AG04449 (cell line): ENCODE measurements at regions of chr17 and their contacts with region 1.

Region 1: DNA sequence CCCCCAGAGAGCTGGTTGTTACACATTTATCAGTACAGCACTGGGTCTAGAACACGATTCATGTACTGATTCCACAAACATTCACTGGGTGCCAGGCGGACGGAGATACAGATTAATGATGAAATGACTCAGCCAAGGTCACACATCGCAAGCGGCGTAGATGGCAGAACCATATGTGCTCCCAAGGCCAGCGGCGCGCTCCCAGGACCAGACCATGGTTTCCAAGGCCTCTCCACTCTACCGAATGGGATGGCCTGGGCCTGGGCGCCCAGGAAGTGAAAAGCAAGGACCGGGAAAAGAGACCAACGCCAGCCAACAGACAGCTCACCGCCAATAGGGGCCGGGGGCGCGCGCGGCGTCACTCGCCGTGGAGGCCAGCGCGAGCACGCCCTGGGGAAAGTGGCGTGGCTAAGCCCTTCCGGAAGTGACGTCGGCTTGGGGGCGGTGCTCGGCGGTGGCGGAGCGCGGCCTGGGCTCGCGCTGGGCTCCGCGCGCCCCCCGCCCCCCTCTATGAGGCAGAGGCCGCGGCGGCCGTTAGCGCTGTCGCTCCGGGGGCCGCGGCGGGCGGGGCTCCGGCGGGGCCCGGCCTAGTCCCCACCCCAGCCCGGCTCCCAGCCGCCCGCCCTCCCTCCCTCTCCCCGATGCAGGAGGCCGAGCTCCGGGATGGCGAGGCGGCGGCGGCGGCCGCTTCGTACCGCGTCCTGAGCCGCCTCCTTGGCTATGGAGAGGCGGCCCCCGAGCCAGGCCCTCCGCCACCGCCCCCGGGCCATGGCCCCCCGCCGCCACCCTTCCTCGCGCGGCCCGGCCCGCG is at the start of gene SOCS7:
- DNase-seq: peak; percentile 17
- H3K4me3 ChIP-seq: peak within 1 kb of the TSS; percentile 75
- CTCF ChIP-seq: no peak

Region 2: GRCh38 chr17:37541880-37542660 is 809.5 kb before region 1 on chr17:
- CTCF ChIA-PET with region 1: no interaction called
- POLR2A ChIA-PET with region 1: no interaction called
- DNase-seq: peak; percentile 73
- H3K4me3 ChIP-seq: no peak overlapping the region
- CTCF ChIP-seq: no peak

Region 3: GRCh38 chr17:37824534-37825485 is 526.8 kb before region 1 on chr17:
- CTCF ChIA-PET with region 1: no interaction called
- POLR2A ChIA-PET with region 1: no interaction called
- DNase-seq: no peak
- H3K4me3 ChIP-seq: no peak overlapping the region
- CTCF ChIP-seq: no peak

Region 4: DNA sequence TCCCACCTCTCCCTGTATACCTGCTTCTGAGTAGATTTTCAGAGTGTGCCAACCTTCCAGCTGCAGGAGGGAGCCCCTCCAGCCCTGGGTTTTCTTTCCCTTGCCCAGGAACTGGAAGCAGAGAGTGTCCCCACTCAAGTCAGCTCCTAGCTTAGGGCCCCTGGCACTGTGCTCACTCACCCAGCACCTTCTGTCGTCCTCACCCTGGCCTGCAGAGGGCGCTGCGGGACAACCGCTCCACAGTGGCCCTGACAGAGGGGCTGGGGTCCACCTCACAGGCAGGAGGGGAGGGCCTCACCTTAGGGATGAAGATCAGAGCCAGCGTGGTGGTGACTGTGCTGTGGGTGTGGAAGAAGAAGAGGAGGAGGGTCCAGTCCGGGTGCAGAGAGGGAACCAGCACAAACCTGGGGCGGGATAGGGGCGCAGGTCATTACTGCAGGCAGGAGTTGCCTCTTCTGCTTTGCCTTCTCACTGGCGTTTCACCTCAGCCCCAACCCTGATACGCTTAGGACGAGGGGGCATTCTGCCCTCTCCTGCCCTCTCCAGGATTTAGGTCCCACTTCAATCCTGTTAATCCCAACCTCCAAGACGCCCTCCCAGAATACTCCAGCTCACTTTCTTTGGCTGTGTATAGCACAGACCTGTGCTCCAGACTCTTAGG is 17.9 kb before region 1 on chr17:
- CTCF ChIA-PET with region 1: interaction called, 81 read pairs
- POLR2A ChIA-PET with region 1: no interaction called
- DNase-seq: no peak
- H3K4me3 ChIP-seq: no peak overlapping the region
- CTCF ChIP-seq: peak; percentile 75

Region 5: GRCh38 chr17:38379438-38379837 is 27.8 kb after region 1 on chr17:
- CTCF ChIA-PET with region 1: interaction called, 40 read pairs
- POLR2A ChIA-PET with region 1: interaction called, 4 read pairs
- DNase-seq: no peak
- H3K4me3 ChIP-seq: no peak overlapping the region
- CTCF ChIP-seq: no peak

Region 6: DNA sequence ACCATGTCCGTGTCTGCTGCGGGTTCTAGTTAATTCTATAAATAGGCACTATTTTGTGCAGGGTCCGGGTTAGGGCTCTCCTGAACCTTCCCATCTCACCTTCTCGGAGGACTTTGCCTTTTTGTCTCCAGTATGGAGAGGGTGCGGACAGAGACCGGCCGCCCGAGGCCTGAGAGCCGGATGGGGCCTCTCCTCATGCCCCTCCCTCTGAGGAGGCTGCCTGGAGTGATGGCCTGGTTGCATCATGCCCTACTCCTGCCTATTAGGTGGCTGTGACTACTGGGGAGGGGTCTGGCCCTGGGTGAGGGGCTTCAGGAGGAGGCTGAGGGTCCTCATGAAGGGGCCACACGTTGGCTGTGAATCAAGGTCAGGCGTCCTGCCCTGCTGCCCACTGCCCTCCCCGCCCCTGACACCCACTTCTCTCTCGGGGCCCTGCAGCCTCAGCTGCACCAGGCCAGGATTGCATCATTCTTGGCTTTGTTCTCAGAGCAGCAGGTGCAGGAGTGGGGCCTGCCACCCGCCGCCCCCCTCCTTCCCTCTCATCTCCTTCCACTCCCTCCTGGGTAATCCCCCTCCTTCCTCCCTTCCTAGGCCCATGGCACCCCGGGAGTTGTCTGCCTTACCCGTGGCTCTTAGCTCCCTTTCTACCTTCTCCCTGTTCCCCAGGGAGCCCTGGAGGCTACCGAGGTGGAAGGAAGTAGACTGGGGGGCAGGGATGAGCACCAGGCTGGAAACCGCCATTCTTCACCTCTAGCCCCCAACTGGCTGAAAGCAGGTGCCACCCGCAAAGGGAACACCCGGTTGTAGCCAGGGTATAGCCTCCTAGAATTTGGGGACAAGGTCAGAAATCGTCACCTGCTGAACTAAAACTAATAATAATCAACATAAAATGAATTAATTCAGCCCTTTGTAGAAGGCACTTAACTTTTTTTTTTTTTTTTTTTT is 63.9 kb after region 1 on chr17:
- CTCF ChIA-PET with region 1: interaction called, 456 read pairs
- POLR2A ChIA-PET with region 1: interaction called, 4 read pairs
- DNase-seq: no peak
- H3K4me3 ChIP-seq: peak overlapping the region; percentile 36
- CTCF ChIP-seq: no peak

Region 7: GRCh38 chr17:38428112-38428642 is 76.6 kb after region 1 on chr17 and contains the start of gene ARHGAP23:
- CTCF ChIA-PET with region 1: interaction called, 57 read pairs
- POLR2A ChIA-PET with region 1: no interaction called
- DNase-seq: no peak
- H3K4me3 ChIP-seq: peak within 1 kb of the TSS; percentile 74
- CTCF ChIP-seq: no peak

Region 8: GRCh38 chr17:38584350-38584925 is 232.8 kb after region 1 on chr17:
- CTCF ChIA-PET with region 1: interaction called, 10 read pairs
- POLR2A ChIA-PET with region 1: no interaction called
- DNase-seq: no peak
- H3K4me3 ChIP-seq: no peak overlapping the region
- CTCF ChIP-seq: peak; percentile 89